Colonic mucosa (tissue), 4 donors: ENCODE measurements at regions of chr4 and their contacts with region 1.

Region 1: GRCh38 chr4:6986781-6987587 is 56.2 kb upstream of the TADA2B start:
- DNase-seq: peak; percentile 96
- H3K4me3 ChIP-seq: peak overlapping the region; percentile 65
- H3K27ac ChIP-seq: peak overlapping the region; percentile 96
- H3K4me1 ChIP-seq: peaks cover 14% of the 10 kb centered on the region
- H3K27me3 ChIP-seq: no peaks in the 10 kb centered on the region
- CTCF ChIP-seq: no peak

Region 2: DNA sequence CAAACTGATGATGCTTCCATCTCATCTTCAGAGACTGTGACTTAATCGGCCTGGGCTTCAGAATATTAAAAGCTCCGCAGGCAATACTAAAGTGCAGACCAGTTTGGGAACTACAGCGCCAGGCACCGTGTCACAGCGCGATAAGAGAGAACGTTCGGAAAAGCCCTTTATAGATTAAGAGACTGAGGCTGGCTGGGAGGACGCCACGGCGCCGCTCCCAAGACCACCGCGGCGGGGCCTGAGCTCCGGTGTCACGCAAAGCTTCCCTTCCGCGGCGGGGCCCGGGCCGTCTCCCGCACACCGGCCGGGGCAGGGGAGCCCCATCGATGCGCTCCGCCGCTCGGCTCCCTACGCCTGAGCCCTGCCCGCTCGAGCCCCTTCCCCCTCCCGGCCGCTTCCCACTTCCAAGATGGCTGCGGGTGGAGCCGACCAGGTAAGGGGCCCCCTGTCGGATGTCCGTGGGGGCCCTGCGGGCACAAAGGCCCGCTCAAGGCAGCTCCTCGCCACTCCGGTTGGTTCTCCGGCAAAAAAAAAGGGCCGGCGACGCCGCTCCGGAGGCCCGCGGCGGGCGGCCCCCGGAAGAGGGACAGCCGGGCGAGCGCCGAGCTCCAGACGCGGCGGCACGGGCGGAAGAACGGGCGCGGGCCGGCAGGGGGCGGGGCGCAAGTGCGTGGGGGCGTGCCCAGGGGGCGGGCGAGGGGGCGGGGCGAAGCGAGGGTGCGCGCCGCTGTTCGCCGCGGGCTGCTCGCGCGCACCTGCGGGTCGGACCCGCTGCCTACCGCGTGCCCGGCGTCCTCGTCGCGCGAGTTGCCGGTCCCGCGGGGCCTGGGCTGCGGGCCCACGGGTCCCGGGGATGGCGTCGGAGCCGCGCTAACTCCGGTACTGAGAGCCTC is 77.7 kb before region 1 on chr4 and contains the start of gene TBC1D14:
- intact Hi-C with region 1: loop called (anchors 5 kb)
- DNase-seq: peak; percentile 86
- H3K4me3 ChIP-seq: peak within 1 kb of the TSS; percentile 48
- H3K27ac ChIP-seq: peak within 1 kb of the TSS; percentile 96
- H3K4me1 ChIP-seq: peaks cover 4% of the 10 kb centered on the region
- H3K27me3 ChIP-seq: no peaks in the 10 kb centered on the region
- CTCF ChIP-seq: no peak
- total RNA-seq, gene TBC1D14: 43.2 to 46.6 TPM

Region 3: GRCh38 chr4:6920171-6920570 is 66.8 kb before region 1 on chr4:
- intact Hi-C with region 1: no loop called
- DNase-seq: no peak
- H3K4me3 ChIP-seq: no peak overlapping the region
- H3K27ac ChIP-seq: no peak overlapping the region
- H3K4me1 ChIP-seq: peaks cover 30% of the 10 kb centered on the region
- H3K27me3 ChIP-seq: no peaks in the 10 kb centered on the region
- CTCF ChIP-seq: no peak

Region 4: DNA sequence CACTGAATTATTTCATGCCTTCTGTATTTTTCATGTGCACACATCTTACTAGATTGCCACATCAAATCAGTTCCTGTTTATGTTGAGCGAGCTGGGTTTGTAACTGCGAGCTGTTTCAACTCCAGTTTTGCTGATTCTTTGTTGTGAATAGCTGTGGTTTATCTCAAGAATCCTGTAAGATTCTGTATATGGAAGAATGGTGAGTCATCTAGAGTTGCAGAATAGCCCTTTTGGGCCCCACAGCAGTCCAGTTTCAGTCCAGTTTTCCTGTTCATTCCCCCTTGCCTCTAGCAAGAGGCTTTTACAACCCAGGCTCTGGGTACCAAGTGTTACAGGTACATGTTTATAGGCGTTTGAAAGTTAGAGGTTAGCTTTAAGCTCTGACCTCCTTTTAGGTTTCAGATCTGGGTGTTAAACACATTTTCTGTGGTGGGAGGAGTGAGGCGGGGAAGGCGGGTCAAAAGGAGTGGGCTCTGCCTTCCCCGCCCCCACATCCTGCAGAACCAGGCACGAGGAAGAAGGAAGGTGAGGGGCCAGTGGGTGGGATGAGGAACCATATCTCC is 44.7 kb before region 1 on chr4:
- intact Hi-C with region 1: no loop called
- DNase-seq: no peak
- H3K4me3 ChIP-seq: no peak overlapping the region
- H3K27ac ChIP-seq: peak overlapping the region; percentile 89
- H3K4me1 ChIP-seq: peaks cover 12% of the 10 kb centered on the region
- H3K27me3 ChIP-seq: no peaks in the 10 kb centered on the region
- CTCF ChIP-seq: no peak

Region 5: GRCh38 chr4:7070729-7071511 is 83.9 kb after region 1 on chr4:
- intact Hi-C with region 1: loop called (anchors 5 kb)
- DNase-seq: peak; percentile 92
- H3K4me3 ChIP-seq: no peak overlapping the region
- H3K27ac ChIP-seq: no peak overlapping the region
- H3K4me1 ChIP-seq: peaks cover 13% of the 10 kb centered on the region
- H3K27me3 ChIP-seq: no peaks in the 10 kb centered on the region
- CTCF ChIP-seq: peak; percentile 99

Region 6: DNA sequence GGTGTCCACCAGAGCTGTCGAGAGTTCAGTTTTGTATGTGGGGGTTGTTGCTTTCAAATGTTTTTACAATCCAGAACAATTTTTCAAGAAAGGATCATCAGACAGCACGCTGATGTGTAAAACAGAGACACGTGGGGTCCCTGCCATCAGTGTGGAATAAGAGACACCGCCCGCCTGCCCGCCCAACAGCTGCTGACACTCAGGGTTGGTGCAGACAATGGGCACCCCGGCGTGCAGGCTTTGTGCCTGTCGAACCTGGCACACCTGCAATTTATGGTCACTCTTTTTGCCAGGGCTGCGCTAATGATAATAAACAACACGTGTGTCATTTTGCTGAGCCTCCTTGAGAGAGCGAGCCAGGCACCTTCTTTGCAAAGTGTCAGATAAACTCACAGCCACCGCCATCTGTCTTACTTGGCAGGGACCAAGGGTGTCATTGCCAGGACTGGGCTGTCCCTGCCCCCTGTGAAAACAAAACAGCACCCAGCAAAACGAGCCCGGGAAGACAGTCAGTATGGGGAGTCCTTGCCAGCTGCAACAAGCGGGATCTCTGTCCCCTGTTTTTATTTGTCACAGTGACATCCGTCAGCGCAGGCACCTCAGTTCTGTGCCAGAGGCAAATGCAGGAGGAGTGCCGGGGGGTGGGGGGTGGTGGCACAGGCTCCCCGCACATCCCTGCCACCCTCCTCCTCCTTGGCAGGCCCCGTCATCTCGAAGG is 378.6 kb after region 1 on chr4:
- intact Hi-C with region 1: no loop called
- DNase-seq: no peak
- H3K4me3 ChIP-seq: no peak overlapping the region
- H3K27ac ChIP-seq: no peak overlapping the region
- H3K4me1 ChIP-seq: no peaks in the 10 kb centered on the region
- H3K27me3 ChIP-seq: no peaks in the 10 kb centered on the region
- CTCF ChIP-seq: no peak